Heart left ventricle (tissue), 16 donors: ENCODE measurements at regions of chr4 and their contacts with region 1.

Region 1: DNA sequence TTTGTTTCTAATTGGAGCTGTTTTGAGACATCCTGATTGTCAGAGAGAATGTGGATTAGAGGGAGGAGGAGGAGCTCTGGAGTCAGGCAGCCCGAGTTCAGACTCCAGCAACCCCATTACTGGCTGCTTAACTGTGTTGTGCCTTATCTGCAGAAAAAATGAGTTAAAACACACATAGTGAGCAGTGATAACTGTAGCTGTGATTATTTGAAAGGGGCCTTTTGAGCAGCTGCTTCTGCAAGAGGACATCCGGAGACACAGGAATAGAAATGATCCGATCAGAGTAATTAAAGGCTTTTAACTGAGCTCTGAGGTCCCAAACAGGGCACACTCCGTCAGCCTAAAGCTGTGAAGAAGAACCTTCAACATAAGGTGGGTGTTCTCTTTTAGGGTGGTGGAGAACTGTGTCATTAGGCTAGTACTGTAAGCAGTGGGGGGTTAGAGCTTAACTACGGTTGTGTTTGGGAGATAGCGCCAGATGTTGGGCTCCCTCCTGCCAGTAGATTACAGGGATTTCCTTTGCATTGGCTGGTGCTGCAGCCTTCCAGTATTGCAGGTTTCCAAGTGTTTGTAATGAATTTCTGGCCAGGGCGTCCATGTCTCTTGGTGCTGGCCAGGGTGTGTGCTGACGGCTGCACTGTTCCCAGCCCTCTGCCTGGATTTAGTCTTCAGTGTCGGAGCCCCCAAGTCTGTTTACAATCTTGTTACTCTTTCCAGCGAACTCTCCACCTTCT is 24.3 kb downstream of the ADD1 start:
- DNase-seq: peak in 2 of 5 donors; percentile 25 to 53
- ATAC-seq: peak; percentile 66 to 81 (median 68)
- H3K4me3 ChIP-seq: peak overlapping the region in 10 of 12 donors; percentile 15 to 50 (median 38)
- H3K27ac ChIP-seq: peak overlapping the region; percentile 42 to 83 (median 70)
- H3K4me1 ChIP-seq: peaks cover 41 to 100% (median 97%) of the 10 kb centered on the region in 12 donors
- H3K27me3 ChIP-seq: no peaks in the 10 kb centered on the region
- CTCF ChIP-seq: no peak
- POLR2A ChIP-seq: no peak

Region 2: GRCh38 chr4:2800691-2801596 is 67.0 kb before region 1 on chr4:
- intact Hi-C with region 1: loop called in 1 of 10 experiments (anchors 5 kb)
- DNase-seq: peak; percentile 81 to 93 (median 89)
- ATAC-seq: peak; percentile 72 to 81 (median 74)
- H3K4me3 ChIP-seq: peak overlapping the region in 9 of 12 donors; percentile 12 to 60 (median 33)
- H3K27ac ChIP-seq: peak overlapping the region; percentile 76 to 96 (median 88)
- H3K4me1 ChIP-seq: peaks cover 55 to 98% (median 92%) of the 10 kb centered on the region in 12 donors
- H3K27me3 ChIP-seq: no peaks in the 10 kb centered on the region
- CTCF ChIP-seq: no peak
- POLR2A ChIP-seq: peak in 1 of 2 donors; percentile 36

Region 3: DNA sequence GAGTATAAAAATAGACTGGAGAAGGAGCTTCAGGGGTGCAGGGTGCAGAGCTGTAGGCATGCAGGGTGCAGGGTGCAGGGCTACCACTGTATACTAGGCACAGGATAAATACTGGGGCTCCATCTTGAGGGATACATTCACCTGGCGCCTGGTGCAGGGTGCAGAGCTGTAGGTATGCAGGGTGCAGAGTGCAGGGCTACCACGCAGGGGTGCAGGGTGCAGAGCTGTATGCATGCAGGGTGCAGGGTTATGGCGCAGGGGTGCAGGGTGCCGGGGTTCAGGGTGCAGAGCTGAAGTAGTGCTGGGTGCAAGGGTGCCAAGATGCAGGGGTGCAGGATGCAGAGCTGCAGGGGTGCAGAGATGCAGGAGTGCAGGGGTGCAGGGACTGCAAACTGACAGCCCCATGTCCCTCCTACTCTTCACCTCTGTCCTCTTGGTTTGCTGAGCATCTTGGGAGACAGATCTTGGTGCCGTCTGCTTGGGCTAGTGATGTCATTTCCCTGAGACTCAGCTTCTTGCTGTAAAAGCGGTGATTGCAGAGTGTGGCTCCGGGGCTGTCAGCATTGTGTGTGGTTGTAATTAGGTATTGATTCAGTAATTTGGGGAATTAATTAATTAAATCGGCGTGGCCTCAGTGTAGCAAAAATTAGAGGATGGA is 989.5 kb after region 1 on chr4:
- intact Hi-C with region 1: no loop called
- DNase-seq: peak in 2 of 5 donors; percentile 10 to 49
- ATAC-seq: peak in 1 of 4 donors; percentile 16
- H3K4me3 ChIP-seq: no peak overlapping the region
- H3K27ac ChIP-seq: no peak overlapping the region
- H3K4me1 ChIP-seq: peaks cover 0 to 3% (median 0%) of the 10 kb centered on the region in 12 donors
- H3K27me3 ChIP-seq: peaks cover 0 to 61% (median 17%) of the 10 kb centered on the region in 9 donors
- CTCF ChIP-seq: no peak
- POLR2A ChIP-seq: no peak